HepG2 (cell line): ENCODE measurements at regions of chr20 and their contacts with region 1.

Region 1: GRCh38 chr20:59571551-59572314 is 32.6 kb upstream of the PHACTR3 start:
- DNase-seq: peak; percentile 51
- ATAC-seq: peak; percentile 84
- H3K4me3 ChIP-seq: peak overlapping the region in 2 of 3 experiments; percentile 19 to 63; a peak in 3 of 6 replicates
- H3K27ac ChIP-seq: no peak overlapping the region
- H3K4me1 ChIP-seq: peaks cover 4% of the 10 kb centered on the region; the same call in 1 of the 2 replicates
- H3K27me3 ChIP-seq: peaks cover 11 to 60% of the 10 kb centered on the region in 2 experiments; a peak in 3 of 5 replicates
- CTCF ChIP-seq: peak; percentile 87
- EP300 ChIP-seq: no peak
- POLR2A ChIP-seq: no peak
- RAD21 ChIP-seq: peak; percentile 49; the same call in 1 of the 2 replicates

Region 2: DNA sequence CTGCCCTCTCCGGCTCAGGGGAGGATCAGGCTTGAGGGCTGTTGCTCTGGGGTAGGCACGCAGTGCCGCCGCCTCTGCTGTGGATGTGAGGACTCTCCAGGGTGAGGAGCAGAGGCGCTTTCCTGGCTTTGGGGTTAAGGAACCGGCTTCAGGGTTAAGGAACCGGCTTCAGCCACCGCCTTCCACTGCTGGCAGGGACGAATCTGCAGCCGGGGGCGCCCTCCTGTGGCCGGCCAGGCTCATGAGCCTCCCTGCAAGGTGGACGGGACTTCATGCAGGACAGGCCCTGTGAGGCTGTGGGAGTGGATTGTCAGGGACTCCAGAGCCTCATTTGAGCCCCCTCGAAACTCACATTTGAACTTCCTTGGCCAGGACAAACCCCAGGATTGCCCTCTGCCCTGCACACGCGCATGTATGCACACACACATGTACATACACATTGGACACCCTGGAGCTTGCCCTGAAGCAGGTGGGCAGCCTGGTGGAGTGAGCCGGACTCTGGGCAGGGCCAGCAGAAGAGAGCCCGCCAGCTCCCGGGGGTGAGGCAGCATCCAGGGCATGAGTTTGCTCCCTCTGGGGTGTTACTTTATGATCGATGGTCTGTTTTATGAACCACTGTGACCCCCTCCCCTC is 179.4 kb after region 1 on chr20:
- CTCF ChIA-PET with region 1: interaction called, 14 read pairs
- POLR2A ChIA-PET with region 1: no interaction called
- in situ Hi-C with region 1: loop called (anchors 5 kb)
- intact Hi-C with region 1: loop called (anchors 1 kb)
- DNase-seq: peak; percentile 52
- ATAC-seq: peak; percentile 89
- H3K4me3 ChIP-seq: no peak overlapping the region
- H3K27ac ChIP-seq: no peak overlapping the region
- H3K4me1 ChIP-seq: no peaks in the 10 kb centered on the region
- H3K27me3 ChIP-seq: peaks cover 14 to 89% of the 10 kb centered on the region in 2 experiments
- CTCF ChIP-seq: peak; percentile 93
- EP300 ChIP-seq: no peak
- POLR2A ChIP-seq: no peak
- RAD21 ChIP-seq: peak; percentile 85

Region 3: GRCh38 chr20:60009826-60010616 is 438.3 kb after region 1 on chr20:
- CTCF ChIA-PET with region 1: no interaction called
- POLR2A ChIA-PET with region 1: no interaction called
- in situ Hi-C with region 1: no loop called
- intact Hi-C with region 1: no loop called
- DNase-seq: no peak
- ATAC-seq: peak; percentile 73
- H3K4me3 ChIP-seq: no peak overlapping the region
- H3K27ac ChIP-seq: no peak overlapping the region
- H3K4me1 ChIP-seq: no peaks in the 10 kb centered on the region
- H3K27me3 ChIP-seq: peaks cover 0 to 9% of the 10 kb centered on the region in 2 experiments; a peak in 1 of 5 replicates
- CTCF ChIP-seq: peak; percentile 43; the same call in 1 of the 2 replicates
- EP300 ChIP-seq: no peak
- POLR2A ChIP-seq: no peak
- RAD21 ChIP-seq: no peak